ENCODE measurements at regions of chr12 and their contacts with region 1.

Region 1: DNA sequence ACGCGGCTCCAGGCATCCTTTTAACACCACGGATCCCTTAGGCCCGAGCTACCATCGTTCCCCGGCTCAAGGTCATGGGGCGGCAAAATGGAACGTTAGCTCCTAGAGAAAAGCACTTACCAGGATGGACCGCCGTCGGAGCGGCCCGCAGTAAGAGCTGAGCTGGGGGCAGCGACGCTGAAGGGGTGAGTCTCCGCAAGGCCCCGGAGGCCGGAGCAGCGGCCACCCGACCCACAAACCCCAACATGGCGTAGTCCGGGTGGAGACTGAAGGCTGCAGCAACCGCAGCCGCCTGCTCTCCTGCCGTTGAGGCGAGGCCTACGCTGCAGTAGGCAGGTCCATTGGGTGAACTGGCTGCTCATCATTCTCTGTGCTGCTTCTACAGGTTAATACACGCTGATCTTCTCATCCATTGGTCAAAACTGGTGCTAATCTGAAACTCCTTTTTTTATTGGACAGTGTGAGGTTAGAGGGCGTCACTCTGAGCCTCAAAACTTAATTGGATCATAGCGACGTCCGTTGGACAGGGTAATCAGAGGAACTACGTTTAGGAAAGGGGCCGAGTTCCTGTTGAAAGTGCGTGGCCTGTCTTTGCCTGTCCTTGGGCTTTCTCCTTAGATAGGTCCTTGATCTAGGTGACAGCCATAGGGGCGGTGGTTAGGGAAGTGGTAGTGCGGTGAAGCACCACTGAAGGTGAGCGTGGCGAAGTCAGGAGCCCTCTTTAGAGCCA is at the start of gene ATP5F1B:
- DNase-seq: peak; percentile 68
- ATAC-seq: peak; percentile 97
- H3K4me3 Mint-ChIP-seq: peak within 1 kb of the TSS; percentile 97
- H3K27ac Mint-ChIP-seq: peak within 1 kb of the TSS; percentile 99
- H3K4me1 Mint-ChIP-seq: peaks cover 25% of the 10 kb centered on the region
- H3K27me3 Mint-ChIP-seq: no peaks in the 10 kb centered on the region
- CTCF ChIP-seq: no peak
- total RNA-seq, gene ATP5F1B: 499 and 503 TPM in 2 replicates

Region 2: GRCh38 chr12:55926738-55927587 is 718.9 kb before region 1 on chr12:
- CTCF ChIA-PET with region 1: no interaction called
- POLR2A ChIA-PET with region 1: no interaction called
- intact Hi-C with region 1: no loop called
- DNase-seq: peak; percentile 84
- ATAC-seq: peak; percentile 48
- H3K4me3 Mint-ChIP-seq: peak overlapping the region; percentile 98
- H3K27ac Mint-ChIP-seq: peak overlapping the region; percentile 98
- H3K4me1 Mint-ChIP-seq: peaks cover 67% of the 10 kb centered on the region
- H3K27me3 Mint-ChIP-seq: no peaks in the 10 kb centered on the region
- CTCF ChIP-seq: peak; percentile 50

Region 3: DNA sequence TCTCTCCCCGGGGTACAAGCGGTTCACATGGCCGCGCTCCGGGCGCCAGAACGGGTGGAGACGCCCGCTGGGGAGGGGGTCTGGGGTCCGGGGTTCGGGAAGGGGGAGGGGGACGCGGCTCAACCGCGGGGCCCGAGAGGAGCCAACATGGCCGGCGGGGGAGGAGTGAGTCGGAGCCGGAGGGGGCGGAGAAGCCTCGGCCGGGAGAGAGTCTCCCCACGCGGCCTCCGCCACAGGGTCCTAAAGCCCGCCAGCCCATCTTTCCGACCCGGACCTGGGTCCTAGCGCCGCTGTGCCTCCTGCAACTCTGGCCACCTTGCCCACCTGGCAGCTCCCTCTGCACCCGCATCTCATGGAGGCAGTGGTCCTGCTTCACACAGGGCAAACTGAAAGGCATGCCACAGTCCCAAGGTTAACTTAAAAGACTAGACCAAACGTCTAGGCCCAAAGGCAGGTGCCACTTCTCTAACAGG is 15.7 kb before region 1 on chr12 and contains the start of gene BAZ2A:
- CTCF ChIA-PET with region 1: interaction called, 3 read pairs
- POLR2A ChIA-PET with region 1: interaction called, 87 read pairs
- intact Hi-C with region 1: loop called (anchors 1 kb)
- DNase-seq: peak; percentile 74
- ATAC-seq: peak; percentile 62
- H3K4me3 Mint-ChIP-seq: peak within 1 kb of the TSS; percentile 96
- H3K27ac Mint-ChIP-seq: peak within 1 kb of the TSS; percentile 88
- H3K4me1 Mint-ChIP-seq: peaks cover 80% of the 10 kb centered on the region
- H3K27me3 Mint-ChIP-seq: no peaks in the 10 kb centered on the region
- CTCF ChIP-seq: no peak
- total RNA-seq, gene BAZ2A: 153 and 192 TPM in 2 replicates

Region 4: DNA sequence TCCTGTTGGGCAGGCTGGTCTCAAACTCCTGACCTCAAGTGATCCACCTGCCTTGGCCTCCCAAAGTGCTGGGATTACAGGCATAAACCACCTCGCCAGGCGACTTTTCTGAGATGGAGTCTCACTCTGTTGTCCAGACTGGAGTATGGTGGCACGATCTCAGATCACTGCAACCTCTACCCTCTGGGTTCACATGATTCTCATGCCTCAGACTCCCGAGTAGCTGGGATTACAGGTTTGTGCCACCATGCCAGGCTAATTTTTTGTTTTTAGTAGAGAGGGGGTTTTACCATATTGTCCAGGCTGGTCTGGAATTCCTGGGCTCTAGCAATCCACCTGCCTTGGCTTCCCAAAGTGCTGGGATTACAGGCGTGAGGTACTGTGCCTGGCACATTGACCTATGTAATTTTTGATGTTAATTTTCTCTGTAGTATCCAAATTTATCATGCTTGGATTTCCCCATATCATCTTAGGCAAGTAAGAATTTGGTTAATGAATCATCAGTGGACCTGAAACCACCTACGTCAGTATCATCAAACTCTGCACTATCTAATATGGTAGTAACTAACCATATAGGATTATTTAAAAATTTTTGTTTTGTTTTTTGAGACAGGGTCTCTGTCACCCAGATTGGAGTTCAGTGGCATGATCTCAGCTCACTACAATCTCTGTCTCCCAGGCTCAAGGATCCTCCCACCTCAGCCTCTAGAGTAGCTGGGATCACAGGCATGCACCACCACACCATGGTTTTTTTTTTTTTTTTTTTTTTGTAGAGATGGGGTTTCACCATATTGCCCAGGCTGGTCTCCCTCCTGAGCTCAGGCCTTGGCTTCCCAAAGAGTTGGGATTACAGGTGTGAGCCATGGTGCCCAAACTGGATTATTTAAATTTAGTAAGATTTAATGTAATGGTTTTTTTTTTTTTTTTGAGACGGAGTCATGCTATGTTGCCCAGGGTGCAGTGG is 11.8 kb after region 1 on chr12:
- CTCF ChIA-PET with region 1: interaction called, 4 read pairs
- POLR2A ChIA-PET with region 1: interaction called, 46 read pairs
- intact Hi-C with region 1: loop called (anchors 1 kb)
- DNase-seq: no peak
- ATAC-seq: peak; percentile 73
- H3K4me3 Mint-ChIP-seq: peak overlapping the region; percentile 64
- H3K27ac Mint-ChIP-seq: peak overlapping the region; percentile 89
- H3K4me1 Mint-ChIP-seq: peaks cover 35% of the 10 kb centered on the region
- H3K27me3 Mint-ChIP-seq: no peaks in the 10 kb centered on the region
- CTCF ChIP-seq: no peak

Region 5: GRCh38 chr12:56670836-56671235 is 25.0 kb after region 1 on chr12:
- CTCF ChIA-PET with region 1: no interaction called
- POLR2A ChIA-PET with region 1: interaction called, 11 read pairs
- intact Hi-C with region 1: no loop called
- DNase-seq: no peak
- ATAC-seq: no peak
- H3K4me3 Mint-ChIP-seq: no peak overlapping the region
- H3K27ac Mint-ChIP-seq: no peak overlapping the region
- H3K4me1 Mint-ChIP-seq: peaks cover 16% of the 10 kb centered on the region
- H3K27me3 Mint-ChIP-seq: no peaks in the 10 kb centered on the region
- CTCF ChIP-seq: no peak

Measured in activated B cell treated with CpG ODN at 0.5 μM for 24 hours (primary cell).